ENCODE measurements at regions of chr4 and their contacts with region 1.

Region 1: DNA sequence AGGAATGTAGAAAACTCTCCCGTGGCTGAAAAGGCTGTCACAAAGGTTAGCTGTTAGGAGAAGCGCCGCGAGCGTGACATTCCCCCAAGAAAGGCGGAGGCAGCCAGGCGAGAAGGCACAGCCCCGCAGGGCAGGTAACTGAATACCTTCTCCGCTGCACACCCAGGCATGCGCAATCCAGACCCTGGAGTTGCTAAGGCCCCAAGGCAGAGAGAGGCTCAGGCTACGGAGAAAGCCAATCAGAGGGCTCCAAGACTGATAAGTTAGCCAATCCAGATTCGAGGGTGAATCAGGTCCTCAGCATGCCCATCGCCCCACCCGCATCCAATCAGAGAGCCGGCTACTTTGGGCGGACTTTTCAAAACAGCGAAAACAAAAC is 485 bp upstream of the CCNG2 start:
- DNase-seq: peak; percentile 90 to 100 (median 96)
- ATAC-seq: peak; percentile 95
- H3K4me3 ChIP-seq: peak overlapping the region; percentile 89
- H3K4me3 Mint-ChIP-seq: peak overlapping the region; percentile 95
- H3K27ac ChIP-seq: peak overlapping the region; percentile 52 to 71
- H3K27ac Mint-ChIP-seq: peak overlapping the region; percentile 97
- H3K4me1 ChIP-seq: peaks cover 20% of the 10 kb centered on the region
- H3K4me1 Mint-ChIP-seq: peaks cover 54% of the 10 kb centered on the region
- H3K27me3 ChIP-seq: no peaks in the 10 kb centered on the region
- H3K27me3 Mint-ChIP-seq: peaks cover 5% of the 10 kb centered on the region
- CTCF ChIP-seq: no peak

Region 2: DNA sequence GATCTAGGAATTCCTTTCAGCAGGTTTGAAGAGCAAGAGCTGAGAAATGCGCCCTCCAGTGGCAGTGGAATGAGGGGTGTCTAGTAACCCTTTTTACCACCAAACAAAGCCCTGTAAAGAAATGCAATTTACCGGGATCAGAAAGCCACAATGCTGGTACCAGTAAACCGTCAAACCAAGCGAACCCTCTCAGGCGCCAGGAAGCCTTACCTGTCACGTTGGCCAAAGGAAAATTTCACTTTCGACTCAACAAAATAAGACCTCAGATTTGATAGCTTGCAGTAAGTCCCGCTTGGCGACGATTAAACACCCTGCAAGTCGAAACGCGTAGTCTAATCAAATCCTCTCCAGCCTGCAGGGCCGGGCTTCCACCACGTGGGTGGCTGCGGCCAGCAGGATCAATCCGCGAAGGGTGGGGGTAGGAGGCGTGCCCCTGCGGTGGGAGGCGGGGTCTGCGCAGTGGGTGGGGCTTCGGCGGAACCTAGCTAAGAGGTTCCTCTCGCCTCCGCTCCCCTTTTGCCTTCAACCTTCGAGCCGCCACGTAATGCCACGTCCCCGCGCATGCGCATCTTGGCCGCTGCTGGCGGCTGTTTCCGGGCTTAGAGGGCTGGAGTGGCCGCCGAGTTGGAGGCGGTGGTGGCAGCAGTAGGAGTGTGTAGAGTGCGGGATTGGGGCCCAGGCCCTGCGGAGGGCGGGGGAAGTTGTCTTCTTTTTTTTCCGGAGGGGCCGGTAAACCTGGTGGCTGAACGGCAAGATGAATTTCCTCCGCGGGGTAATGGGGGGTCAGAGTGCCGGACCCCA is 1432.3 kb before region 1 on chr4 and contains the start of gene USO1:
- CTCF ChIA-PET with region 1: no interaction called
- POLR2A ChIA-PET with region 1: no interaction called
- intact Hi-C with region 1: loop called in 1 of 2 experiments (anchors 5 kb)
- DNase-seq: peak; percentile 99 to 100 (median 99)
- ATAC-seq: peak; percentile 91
- H3K4me3 ChIP-seq: peak within 1 kb of the TSS; percentile 93
- H3K4me3 Mint-ChIP-seq: peak within 1 kb of the TSS; percentile 99
- H3K27ac ChIP-seq: peak within 1 kb of the TSS; percentile 65 to 83
- H3K27ac Mint-ChIP-seq: peak within 1 kb of the TSS; percentile 95
- H3K4me1 ChIP-seq: peaks cover 27% of the 10 kb centered on the region
- H3K4me1 Mint-ChIP-seq: peaks cover 64% of the 10 kb centered on the region
- H3K27me3 ChIP-seq: no peaks in the 10 kb centered on the region
- H3K27me3 Mint-ChIP-seq: no peaks in the 10 kb centered on the region
- CTCF ChIP-seq: peak; percentile 78
- total RNA-seq, gene USO1: 10.5 to 10.9 TPM

Region 3: GRCh38 chr4:75745161-75745560 is 1411.4 kb before region 1 on chr4:
- CTCF ChIA-PET with region 1: no interaction called
- POLR2A ChIA-PET with region 1: no interaction called
- intact Hi-C with region 1: no loop called
- DNase-seq: peak in 1 of 14 experiments; percentile 7
- ATAC-seq: no peak
- H3K4me3 ChIP-seq: no peak overlapping the region
- H3K4me3 Mint-ChIP-seq: no peak overlapping the region
- H3K27ac ChIP-seq: no peak overlapping the region
- H3K27ac Mint-ChIP-seq: no peak overlapping the region
- H3K4me1 ChIP-seq: no peaks in the 10 kb centered on the region
- H3K4me1 Mint-ChIP-seq: peaks cover 28% of the 10 kb centered on the region
- H3K27me3 ChIP-seq: no peaks in the 10 kb centered on the region
- H3K27me3 Mint-ChIP-seq: no peaks in the 10 kb centered on the region
- CTCF ChIP-seq: no peak

Region 4: GRCh38 chr4:76213415-76214176 is 942.9 kb before region 1 on chr4 and contains the start of gene SCARB2:
- CTCF ChIA-PET with region 1: no interaction called
- POLR2A ChIA-PET with region 1: no interaction called
- intact Hi-C with region 1: loop called in 1 of 2 experiments (anchors 5 kb)
- DNase-seq: peak; percentile 40 to 92 (median 66)
- ATAC-seq: peak; percentile 61
- H3K4me3 ChIP-seq: peak within 1 kb of the TSS; percentile 83
- H3K4me3 Mint-ChIP-seq: peak within 1 kb of the TSS; percentile 92
- H3K27ac ChIP-seq: peak within 1 kb of the TSS; percentile 76 to 82
- H3K27ac Mint-ChIP-seq: peak within 1 kb of the TSS; percentile 95
- H3K4me1 ChIP-seq: peaks cover 44% of the 10 kb centered on the region
- H3K4me1 Mint-ChIP-seq: peaks cover 56% of the 10 kb centered on the region
- H3K27me3 ChIP-seq: no peaks in the 10 kb centered on the region
- H3K27me3 Mint-ChIP-seq: no peaks in the 10 kb centered on the region
- CTCF ChIP-seq: no peak
- total RNA-seq, gene SCARB2: 34.4 to 36.0 TPM

Region 5: DNA sequence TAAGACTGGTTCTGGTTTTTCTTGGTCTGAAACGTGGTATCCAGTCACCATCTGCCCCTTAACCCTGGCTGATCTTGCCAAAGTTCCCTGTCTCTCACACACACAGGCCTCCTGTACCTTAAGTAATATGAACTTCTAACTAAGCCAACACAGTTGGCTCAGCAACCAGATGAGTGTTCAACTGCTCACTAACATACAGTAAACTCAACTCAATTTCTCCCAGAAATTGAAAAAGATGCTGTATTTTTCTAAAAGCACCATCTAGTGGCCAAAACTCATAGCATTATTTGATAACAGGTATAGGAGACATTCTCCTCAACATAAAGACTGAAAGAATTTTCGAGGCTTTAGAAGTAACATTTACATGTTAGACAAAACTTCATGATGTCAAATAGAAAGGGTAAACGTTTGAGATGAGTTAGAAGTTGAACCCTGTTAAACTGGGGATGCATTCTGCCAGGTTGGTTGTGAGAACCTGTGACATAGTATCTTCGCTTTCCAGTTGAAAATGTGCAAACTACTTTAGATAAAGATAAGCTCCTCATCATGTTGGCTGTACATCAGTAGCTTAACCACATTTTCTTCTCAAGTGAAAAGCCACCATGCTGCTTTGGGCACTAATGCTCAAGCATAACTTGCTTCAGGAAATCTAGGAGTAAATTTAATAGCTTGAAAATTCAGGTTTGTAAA is 111.9 kb before region 1 on chr4:
- CTCF ChIA-PET with region 1: interaction called, 3 read pairs
- POLR2A ChIA-PET with region 1: interaction called, 4 read pairs
- intact Hi-C with region 1: loop called in 1 of 2 experiments (anchors 5 kb)
- DNase-seq: peak in 3 of 14 experiments; percentile 48 to 64 (median 62)
- ATAC-seq: peak; percentile 57
- H3K4me3 ChIP-seq: no peak overlapping the region
- H3K4me3 Mint-ChIP-seq: no peak overlapping the region
- H3K27ac ChIP-seq: no peak overlapping the region
- H3K27ac Mint-ChIP-seq: peak overlapping the region; percentile 1
- H3K4me1 ChIP-seq: no peaks in the 10 kb centered on the region
- H3K4me1 Mint-ChIP-seq: peaks cover 29% of the 10 kb centered on the region
- H3K27me3 ChIP-seq: no peaks in the 10 kb centered on the region
- H3K27me3 Mint-ChIP-seq: no peaks in the 10 kb centered on the region
- CTCF ChIP-seq: peak; percentile 78

Region 6: GRCh38 chr4:77146186-77147078 is 10.1 kb before region 1 on chr4:
- CTCF ChIA-PET with region 1: interaction called, 3 read pairs
- POLR2A ChIA-PET with region 1: interaction called, 21 read pairs
- intact Hi-C with region 1: no loop called
- DNase-seq: no peak
- ATAC-seq: no peak
- H3K4me3 ChIP-seq: no peak overlapping the region
- H3K4me3 Mint-ChIP-seq: no peak overlapping the region
- H3K27ac ChIP-seq: peak overlapping the region in 1 of 2 donors; percentile 24
- H3K27ac Mint-ChIP-seq: peak overlapping the region; percentile 48
- H3K4me1 ChIP-seq: peaks cover 2% of the 10 kb centered on the region
- H3K4me1 Mint-ChIP-seq: peaks cover 19% of the 10 kb centered on the region
- H3K27me3 ChIP-seq: no peaks in the 10 kb centered on the region
- H3K27me3 Mint-ChIP-seq: peaks cover 4% of the 10 kb centered on the region
- CTCF ChIP-seq: no peak